AG04450 (cell line): ENCODE measurements at regions of chr5 and their contacts with region 1.

Region 1: DNA sequence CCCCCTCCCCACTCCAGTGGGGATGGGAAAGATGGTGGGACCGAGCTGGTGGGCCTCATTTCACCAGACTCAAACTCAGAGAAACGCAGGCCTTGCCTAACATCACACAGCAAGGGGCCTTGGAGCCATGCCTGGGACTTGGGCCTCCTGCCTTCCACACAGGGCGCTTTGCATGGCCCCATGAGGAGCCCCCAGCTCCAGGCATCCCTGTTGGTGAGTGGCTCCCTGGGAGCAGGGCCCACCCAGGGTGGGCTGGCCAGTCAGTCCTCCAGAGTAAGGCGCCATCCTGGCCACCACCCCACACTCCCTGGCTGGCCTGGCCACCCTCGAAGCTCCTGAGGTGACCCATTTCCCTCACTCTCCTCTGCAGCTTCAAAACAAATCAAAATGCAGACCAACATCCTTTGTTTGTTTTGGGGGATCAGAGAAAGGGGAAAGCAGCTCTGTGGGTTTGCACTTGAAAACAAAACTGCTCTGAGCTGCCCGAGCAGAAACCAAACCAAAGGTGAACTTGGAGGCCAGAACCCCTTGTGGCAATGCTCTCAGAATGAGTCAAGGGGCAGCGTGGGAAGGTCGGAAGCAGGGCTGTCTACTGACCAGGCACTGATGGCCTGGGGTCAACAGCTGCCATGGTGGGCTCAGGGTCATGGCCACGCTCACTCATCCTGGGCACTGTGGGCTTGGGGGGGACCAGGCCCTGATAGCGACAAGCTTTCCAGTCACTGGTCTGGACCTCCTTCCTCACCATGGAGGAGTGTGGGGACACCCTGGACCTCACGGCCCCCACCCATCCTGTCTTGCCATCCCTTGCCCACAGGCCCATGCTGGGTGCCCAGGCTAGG is 37.0 kb upstream of the VDAC1 start:
- DNase-seq: no peak
- H3K4me3 ChIP-seq: no peak overlapping the region
- H3K27ac ChIP-seq: no peak overlapping the region
- H3K27me3 ChIP-seq: peaks cover 32% of the 10 kb centered on the region
- CTCF ChIP-seq: no peak

Region 2: DNA sequence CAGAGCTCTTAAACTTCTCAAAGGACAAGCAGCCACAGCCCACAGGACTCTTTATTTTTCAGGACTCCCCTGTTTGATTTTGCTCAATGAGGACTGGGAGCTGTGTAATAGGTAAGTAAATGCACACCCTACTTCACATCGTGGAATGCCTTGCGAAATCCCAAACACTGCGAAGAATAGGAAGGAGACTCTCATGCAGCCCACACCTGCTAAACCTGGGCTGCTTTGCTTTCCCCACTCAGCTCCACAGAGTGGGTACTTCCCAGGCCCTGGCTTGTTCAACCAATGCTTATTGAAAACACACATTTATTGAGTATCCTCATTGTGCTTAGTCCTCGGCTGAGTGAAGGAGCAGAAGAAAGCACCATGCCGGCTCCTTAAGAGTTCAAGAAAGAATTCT is 326.2 kb before region 1 on chr5:
- CTCF ChIA-PET with region 1: no interaction called
- POLR2A ChIA-PET with region 1: no interaction called
- DNase-seq: no peak
- H3K4me3 ChIP-seq: no peak overlapping the region
- H3K27ac ChIP-seq: no peak overlapping the region
- H3K27me3 ChIP-seq: no peaks in the 10 kb centered on the region
- CTCF ChIP-seq: no peak

Region 3: GRCh38 chr5:134018154-134018985 is 23.4 kb before region 1 on chr5:
- CTCF ChIA-PET with region 1: interaction called, 15 read pairs
- POLR2A ChIA-PET with region 1: no interaction called
- DNase-seq: no peak
- H3K4me3 ChIP-seq: no peak overlapping the region
- H3K27ac ChIP-seq: peak overlapping the region; percentile 21
- H3K27me3 ChIP-seq: peaks cover 32% of the 10 kb centered on the region
- CTCF ChIP-seq: no peak

Region 4: GRCh38 chr5:134059758-134060495 is 18.1 kb after region 1 on chr5:
- CTCF ChIA-PET with region 1: interaction called, 22 read pairs
- POLR2A ChIA-PET with region 1: no interaction called
- DNase-seq: no peak
- H3K4me3 ChIP-seq: no peak overlapping the region
- H3K27ac ChIP-seq: no peak overlapping the region
- H3K27me3 ChIP-seq: peaks cover 11% of the 10 kb centered on the region
- CTCF ChIP-seq: no peak

Region 5: GRCh38 chr5:134113902-134114875 is 72.4 kb after region 1 on chr5 and contains the start of gene TCF7:
- CTCF ChIA-PET with region 1: interaction called, 31 read pairs
- POLR2A ChIA-PET with region 1: no interaction called
- DNase-seq: peak; percentile 55
- H3K4me3 ChIP-seq: peak within 1 kb of the TSS; percentile 64
- H3K27ac ChIP-seq: no peak within 1 kb of the TSS
- H3K27me3 ChIP-seq: peaks cover 6% of the 10 kb centered on the region
- CTCF ChIP-seq: no peak
- polyA plus RNA-seq, gene TCF7: 2.1 and 2.7 TPM in 2 replicates

Region 6: DNA sequence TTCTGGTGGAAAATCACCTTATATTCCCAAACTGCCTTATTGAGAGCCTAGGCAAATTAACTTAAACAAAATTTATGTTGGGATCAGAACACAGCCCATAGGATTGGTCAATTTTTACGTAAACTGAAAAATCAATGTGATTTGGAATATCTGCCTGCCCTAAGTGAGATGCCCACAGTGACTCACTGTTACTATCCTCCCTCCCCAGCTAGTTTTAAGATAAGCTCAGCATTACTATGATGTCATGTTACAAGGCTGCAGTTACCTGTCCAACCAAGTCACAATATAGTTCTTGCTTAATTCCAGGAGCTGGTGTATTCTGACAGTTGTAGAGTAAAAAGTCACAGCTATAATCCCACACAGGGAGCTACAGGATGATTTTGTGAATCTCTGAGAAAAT is 111.9 kb after region 1 on chr5:
- CTCF ChIA-PET with region 1: interaction called, 458 read pairs
- POLR2A ChIA-PET with region 1: no interaction called
- DNase-seq: no peak
- H3K4me3 ChIP-seq: no peak overlapping the region
- H3K27ac ChIP-seq: no peak overlapping the region
- H3K27me3 ChIP-seq: no peaks in the 10 kb centered on the region
- CTCF ChIP-seq: no peak

Region 7: GRCh38 chr5:134289509-134290113 is 247.8 kb after region 1 on chr5:
- CTCF ChIA-PET with region 1: interaction called, 15 read pairs
- POLR2A ChIA-PET with region 1: no interaction called
- DNase-seq: peak; percentile 65
- H3K4me3 ChIP-seq: no peak overlapping the region
- H3K27ac ChIP-seq: no peak overlapping the region
- H3K27me3 ChIP-seq: peaks cover 5% of the 10 kb centered on the region
- CTCF ChIP-seq: peak; percentile 78